ENCODE measurements at regions of chr9 and their contacts with region 1.

Region 1: DNA sequence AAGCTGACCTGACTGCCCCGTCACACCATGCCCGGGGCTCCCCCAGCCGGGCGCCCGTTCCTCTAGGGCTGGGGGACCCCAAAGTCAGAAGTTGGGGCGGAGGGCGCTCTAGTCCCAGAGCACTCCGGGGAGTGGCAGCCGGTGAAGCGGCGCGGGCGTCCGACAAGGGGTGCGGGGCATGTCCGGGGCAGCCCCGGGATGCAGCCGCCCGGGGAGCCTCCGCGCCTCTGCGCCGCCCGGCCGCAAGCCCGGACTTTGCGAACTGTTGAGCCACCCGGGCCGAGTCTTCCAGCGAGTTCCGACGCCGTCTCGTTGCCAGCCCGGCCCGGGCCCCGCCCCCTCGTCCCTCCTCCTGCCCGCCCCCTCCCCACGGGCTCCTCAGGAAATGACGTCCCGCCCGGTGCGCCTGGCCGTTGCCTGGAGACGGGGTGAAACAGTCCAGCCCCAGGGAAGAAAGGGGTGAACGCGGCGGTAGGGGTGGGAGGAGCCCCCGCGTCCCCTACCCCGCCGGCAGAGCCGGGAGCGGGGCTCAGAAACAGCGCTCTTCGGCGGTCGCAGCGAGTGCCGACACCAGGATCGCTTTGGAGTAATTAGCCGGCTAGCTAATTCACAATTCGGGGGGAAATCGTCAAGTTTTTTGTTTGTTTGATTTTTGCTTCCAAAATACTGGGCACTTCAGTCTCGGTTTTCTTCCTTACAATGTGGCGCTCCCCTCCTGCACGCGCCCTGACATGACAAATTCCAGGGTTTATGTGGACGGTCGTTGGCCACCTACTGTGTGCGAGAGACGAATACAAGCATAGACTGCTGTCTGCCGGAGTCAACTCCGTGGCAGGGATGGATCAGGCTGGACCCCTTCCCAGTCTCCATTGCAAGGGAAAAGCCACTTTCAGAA is at the start of gene WHRN:
- DNase-seq: peak; percentile 77 to 94
- H3K4me3 ChIP-seq: peak within 1 kb of the TSS; percentile 62 to 68 (median 66)
- H3K27ac ChIP-seq: no peak within 1 kb of the TSS
- H3K4me1 ChIP-seq: peaks cover 10 to 22% (median 16%) of the 10 kb centered on the region in 4 experiments
- H3K27me3 ChIP-seq: peaks cover 2 to 14% (median 8%) of the 10 kb centered on the region in 4 experiments; a peak in 6 of 7 replicates
- CTCF ChIP-seq: peak in 2 of 3 experiments; percentile 0 to 3; a peak in 2 of 4 replicates
- EP300 ChIP-seq: no peak
- POLR2A ChIP-seq: peak; percentile 45 to 64
- RAD21 ChIP-seq: peak; percentile 1 to 9; a peak in 1 of 4 replicates
- total RNA-seq, gene WHRN: 7.4 and 7.7 TPM in 2 replicates

Region 2: GRCh38 chr9:114487607-114488300 is 17.7 kb before region 1 on chr9:
- CTCF ChIA-PET with region 1: interaction called, 33 read pairs
- POLR2A ChIA-PET with region 1: interaction called, 4 read pairs
- DNase-seq: peak in 1 of 2 experiments; percentile 78
- H3K4me3 ChIP-seq: no peak overlapping the region
- H3K27ac ChIP-seq: no peak overlapping the region
- H3K4me1 ChIP-seq: peaks cover 0 to 3% (median 0%) of the 10 kb centered on the region in 4 experiments; a peak in 3 of 7 replicates
- H3K27me3 ChIP-seq: no peaks in the 10 kb centered on the region
- CTCF ChIP-seq: peak; percentile 70 to 86 (median 81)
- EP300 ChIP-seq: no peak
- POLR2A ChIP-seq: no peak
- RAD21 ChIP-seq: peak; percentile 83 to 86

Region 3: DNA sequence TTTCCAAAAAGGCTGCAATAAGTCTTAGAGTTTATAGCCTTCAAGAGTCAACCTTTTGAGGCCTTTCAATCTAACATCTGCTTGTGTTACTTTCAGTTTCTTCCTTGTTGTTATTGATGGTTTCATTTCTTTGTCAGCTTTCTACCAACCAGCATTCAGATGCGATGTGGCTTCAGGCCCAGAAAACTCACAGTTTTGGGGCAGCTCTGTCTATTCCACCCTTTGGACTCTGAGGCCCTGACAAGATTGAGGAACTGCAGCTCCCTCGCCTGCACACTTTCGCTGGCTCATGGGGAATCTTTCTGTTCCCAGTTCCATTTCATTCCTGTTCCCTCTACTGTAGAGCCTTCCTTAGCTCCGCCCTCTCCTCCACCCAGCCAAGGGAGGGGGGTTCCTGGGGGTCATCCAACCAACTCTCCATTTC is 13.2 kb after region 1 on chr9:
- CTCF ChIA-PET with region 1: interaction called, 14 read pairs
- POLR2A ChIA-PET with region 1: interaction called, 4 read pairs
- DNase-seq: no peak
- H3K4me3 ChIP-seq: no peak overlapping the region
- H3K27ac ChIP-seq: no peak overlapping the region
- H3K4me1 ChIP-seq: no peaks in the 10 kb centered on the region
- H3K27me3 ChIP-seq: peaks cover 0 to 2% (median 0%) of the 10 kb centered on the region in 4 experiments; a peak in 2 of 7 replicates
- CTCF ChIP-seq: no peak
- EP300 ChIP-seq: no peak
- POLR2A ChIP-seq: no peak
- RAD21 ChIP-seq: no peak

Region 4: DNA sequence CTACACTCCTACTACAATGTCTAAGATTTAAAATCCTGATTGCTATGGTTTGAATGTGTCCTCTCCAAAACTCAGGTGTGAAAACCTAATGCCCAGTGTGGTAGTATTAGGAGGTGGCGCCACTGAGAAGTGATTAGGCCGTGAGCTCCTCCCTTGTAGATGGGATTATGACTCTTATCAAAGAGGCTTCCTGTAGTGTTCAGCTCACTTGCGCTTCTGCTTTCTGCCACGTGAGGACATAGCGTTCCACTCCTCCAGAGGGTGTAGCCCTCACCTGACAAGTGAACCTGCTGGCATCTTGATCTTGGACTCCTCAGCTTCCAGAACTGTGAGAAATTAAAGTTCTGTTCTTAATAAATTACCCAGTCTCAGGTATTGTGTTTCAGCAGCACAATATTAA is 32.8 kb after region 1 on chr9:
- CTCF ChIA-PET with region 1: interaction called, 10 read pairs
- POLR2A ChIA-PET with region 1: no interaction called
- DNase-seq: peak in 1 of 2 experiments; percentile 23
- H3K4me3 ChIP-seq: no peak overlapping the region
- H3K27ac ChIP-seq: no peak overlapping the region
- H3K4me1 ChIP-seq: no peaks in the 10 kb centered on the region
- H3K27me3 ChIP-seq: no peaks in the 10 kb centered on the region
- CTCF ChIP-seq: peak; percentile 47 to 66 (median 51)
- EP300 ChIP-seq: no peak
- POLR2A ChIP-seq: no peak
- RAD21 ChIP-seq: peak; percentile 64 to 68

Region 5: DNA sequence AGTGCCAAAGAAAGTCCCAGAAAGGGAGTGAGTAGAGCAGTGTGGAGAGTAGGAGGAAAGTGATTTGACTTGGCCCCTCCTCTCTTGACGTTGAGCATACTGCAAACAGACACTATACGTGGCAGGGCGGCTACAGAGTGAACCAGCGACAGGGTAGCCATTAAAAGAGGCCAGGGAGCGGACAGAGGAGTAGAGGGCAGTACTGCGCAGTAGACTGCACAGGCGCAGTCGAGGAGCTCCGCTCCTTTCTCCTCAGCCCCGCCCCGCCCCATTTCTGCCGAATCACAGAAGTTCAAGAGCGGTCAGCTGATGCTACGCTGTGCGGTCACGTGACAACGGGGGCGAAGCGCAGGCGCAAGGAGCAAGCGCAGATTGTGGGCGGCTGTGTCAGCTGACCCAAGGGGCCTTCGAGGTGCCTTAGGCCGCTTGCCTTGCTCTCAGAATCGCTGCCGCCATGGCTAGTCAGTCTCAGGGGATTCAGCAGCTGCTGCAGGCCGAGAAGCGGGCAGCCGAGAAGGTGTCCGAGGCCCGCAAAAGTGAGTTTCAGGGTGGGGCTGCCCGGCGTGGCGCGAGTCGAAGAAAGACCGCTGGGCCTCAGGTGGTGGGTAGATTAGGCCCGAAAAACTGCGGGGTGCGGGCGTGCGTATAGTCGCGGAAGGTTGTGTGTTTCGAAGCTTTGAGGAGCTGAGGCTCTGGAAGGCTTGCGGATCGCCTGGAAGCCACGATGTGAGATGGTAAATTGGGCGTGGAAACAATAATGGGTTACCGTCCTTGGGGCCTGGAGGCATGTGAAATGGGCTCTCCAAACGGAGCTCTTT is 82.2 kb after region 1 on chr9 and contains the start of gene ATP6V1G1:
- CTCF ChIA-PET with region 1: interaction called, 16 read pairs
- POLR2A ChIA-PET with region 1: interaction called, 13 read pairs
- DNase-seq: peak; percentile 96 to 97
- H3K4me3 ChIP-seq: peak within 1 kb of the TSS; percentile 75 to 97 (median 89)
- H3K27ac ChIP-seq: peak within 1 kb of the TSS; percentile 82
- H3K4me1 ChIP-seq: peaks cover 6 to 16% (median 7%) of the 10 kb centered on the region in 4 experiments
- H3K27me3 ChIP-seq: no peaks in the 10 kb centered on the region
- CTCF ChIP-seq: no peak
- EP300 ChIP-seq: peak; percentile 5 to 46; a peak in 2 of 3 replicates
- POLR2A ChIP-seq: peak; percentile 84 to 90
- RAD21 ChIP-seq: peak in 1 of 2 experiments; percentile 10; a peak in 1 of 4 replicates
- total RNA-seq, gene ATP6V1G1: 112 and 114 TPM in 2 replicates

Region 6: GRCh38 chr9:114629563-114630090 is 124.2 kb after region 1 on chr9:
- CTCF ChIA-PET with region 1: no interaction called
- POLR2A ChIA-PET with region 1: no interaction called
- DNase-seq: no peak
- H3K4me3 ChIP-seq: no peak overlapping the region
- H3K27ac ChIP-seq: no peak overlapping the region
- H3K4me1 ChIP-seq: no peaks in the 10 kb centered on the region
- H3K27me3 ChIP-seq: no peaks in the 10 kb centered on the region
- CTCF ChIP-seq: no peak
- EP300 ChIP-seq: no peak
- POLR2A ChIP-seq: no peak
- RAD21 ChIP-seq: no peak